AG04449 (cell line): ENCODE measurements at regions of chr6 and their contacts with region 1.

Region 1: DNA sequence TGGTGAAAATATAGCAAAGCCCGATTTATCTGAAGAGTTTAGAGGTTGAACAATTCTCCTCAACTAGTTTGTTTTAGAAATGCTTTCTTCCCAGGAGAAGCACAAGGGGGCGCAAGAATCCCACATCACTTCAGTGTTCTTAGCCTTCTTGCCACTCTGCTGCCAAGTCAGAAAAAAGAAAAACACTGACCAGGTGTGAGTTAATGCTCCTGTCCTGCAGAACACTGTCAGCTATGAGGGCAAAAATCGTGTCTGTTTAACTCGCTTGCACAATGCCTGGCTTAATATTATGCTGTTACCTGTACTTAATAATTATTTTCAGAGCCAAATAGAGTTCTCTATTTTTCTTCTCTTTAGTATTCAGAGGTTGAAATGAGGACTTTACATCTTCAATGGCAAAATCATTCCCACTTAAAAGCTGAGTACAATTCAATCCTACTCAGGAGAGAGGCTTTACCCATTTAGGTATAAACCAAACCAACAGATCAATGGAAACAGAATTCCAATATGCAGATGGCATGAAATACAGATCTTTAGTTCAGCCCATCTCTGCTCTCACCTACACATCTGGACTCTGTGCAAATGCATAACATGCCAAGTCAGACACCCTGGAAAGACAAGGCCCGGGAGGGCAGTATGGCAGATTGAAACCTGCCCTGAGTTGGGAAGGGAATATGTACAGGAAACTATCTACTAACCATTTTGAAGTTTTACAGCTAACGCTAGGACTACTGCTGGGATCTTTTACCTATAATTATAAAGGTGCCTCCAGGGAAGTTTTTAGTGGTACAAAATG is 71.4 kb upstream of the TULP1 start:
- DNase-seq: no peak
- H3K4me3 ChIP-seq: no peak overlapping the region
- CTCF ChIP-seq: peak; percentile 65

Region 2: GRCh38 chr6:35202066-35202546 is 382.0 kb before region 1 on chr6:
- CTCF ChIA-PET with region 1: no interaction called
- POLR2A ChIA-PET with region 1: no interaction called
- DNase-seq: no peak
- H3K4me3 ChIP-seq: no peak overlapping the region
- CTCF ChIP-seq: no peak

Region 3: DNA sequence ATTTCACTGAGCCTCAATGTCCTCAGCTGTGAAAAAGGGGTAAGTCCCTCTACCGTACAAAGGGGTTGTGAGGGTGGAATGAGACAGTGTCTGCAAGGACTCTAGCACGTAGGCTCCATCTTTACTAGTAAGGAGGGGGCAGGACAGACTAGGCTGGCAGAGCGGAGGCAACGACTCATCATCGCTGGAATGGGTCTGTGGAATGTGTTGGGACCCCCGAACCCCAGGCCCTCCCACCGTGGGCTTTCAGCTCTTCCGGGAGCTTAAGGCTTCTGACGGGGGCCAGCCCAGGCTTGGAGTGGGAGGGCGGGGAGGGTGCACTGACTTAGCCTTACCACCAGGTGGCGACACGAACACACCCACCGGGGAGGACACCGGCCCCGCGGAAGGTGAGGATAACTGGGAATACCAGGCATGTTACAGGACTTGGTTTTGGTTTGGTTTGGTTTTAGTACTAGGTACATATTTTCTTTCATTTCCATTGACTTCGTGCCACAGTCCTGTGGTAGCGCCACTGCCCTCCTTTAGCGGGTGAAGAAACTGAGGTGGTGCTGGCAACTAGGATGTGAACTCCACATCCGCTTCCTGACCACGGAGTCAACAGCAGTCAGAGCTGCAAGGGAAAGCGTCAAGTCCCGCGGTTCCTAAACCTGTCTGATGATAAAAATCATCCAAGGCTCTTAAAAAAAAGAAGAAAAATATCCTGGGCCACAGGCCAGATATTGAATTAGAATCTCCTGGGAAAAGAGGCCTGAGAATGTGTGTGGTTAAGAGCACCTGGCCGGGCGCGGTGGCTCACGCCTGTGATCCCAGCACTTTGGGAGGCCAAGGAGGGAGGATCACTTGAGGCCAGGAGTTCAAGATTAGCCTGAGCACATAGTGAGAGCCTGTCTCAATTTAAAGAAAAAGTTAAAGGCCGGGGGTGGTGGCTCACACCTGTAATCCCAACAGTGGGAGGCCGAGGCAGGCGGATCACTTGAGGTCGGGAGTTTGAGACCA is 61.1 kb before region 1 on chr6:
- CTCF ChIA-PET with region 1: interaction called, 22 read pairs
- POLR2A ChIA-PET with region 1: no interaction called
- DNase-seq: no peak
- H3K4me3 ChIP-seq: no peak overlapping the region
- CTCF ChIP-seq: peak; percentile 95

Region 4: DNA sequence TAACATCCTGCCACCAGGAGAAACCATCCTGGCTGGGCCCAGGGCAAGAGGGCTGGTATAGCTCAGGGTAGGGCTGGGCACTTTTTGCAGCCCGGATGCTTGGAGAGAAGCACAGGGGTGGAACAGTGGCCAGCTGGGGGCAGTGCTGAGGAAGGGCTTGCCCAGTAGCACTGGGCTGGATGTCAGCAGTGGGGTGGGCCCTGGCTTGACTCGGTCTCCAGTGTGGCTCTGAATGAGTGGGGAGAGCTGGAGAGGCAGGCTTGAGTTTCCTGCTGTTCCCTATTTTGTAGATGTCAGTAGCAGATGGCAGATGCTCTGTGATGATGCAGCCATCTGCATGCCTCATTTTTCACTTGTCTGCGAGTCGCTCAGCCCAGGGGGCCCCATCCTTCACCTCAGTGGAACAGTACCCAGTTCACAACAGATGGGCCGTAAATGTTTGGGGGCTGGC is 15.1 kb before region 1 on chr6:
- CTCF ChIA-PET with region 1: interaction called, 99 read pairs
- POLR2A ChIA-PET with region 1: no interaction called
- DNase-seq: no peak
- H3K4me3 ChIP-seq: no peak overlapping the region
- CTCF ChIP-seq: peak; percentile 43

Region 5: DNA sequence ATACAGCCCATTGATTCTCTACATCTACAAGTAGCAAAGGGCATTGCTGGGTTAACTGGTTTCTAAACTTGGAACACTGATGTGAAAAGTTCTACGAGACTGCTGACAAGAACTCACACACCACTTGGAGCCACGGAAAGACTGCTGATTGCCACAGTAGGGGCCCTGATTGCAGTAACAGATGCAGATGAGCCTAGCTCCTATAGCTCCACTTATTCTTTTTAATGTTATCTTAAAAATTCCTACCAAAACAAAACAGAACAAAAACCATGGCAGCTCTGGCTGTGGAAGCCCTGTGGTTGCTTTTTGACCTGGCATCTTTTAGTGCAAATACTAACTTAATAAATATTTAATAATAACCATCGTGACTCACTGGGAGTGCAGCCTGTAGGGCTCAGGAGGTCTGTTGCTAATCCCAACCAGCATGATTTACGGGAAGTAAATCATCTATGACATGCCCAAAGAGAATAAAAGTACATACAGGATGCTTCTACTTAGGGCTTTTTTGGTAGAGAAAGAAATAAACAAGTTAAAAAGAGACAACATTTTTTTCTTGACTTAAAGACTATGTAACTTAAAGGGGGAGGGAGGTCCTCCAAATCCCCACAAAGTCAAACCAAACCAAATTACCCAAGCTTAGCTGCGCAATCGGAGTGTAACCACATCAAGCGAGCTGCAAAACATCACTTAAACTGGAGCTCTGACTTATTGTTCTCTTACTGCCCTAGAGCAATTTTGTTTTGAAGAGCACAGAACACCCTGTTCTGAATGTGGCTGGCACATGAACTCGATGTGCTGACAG is 17.4 kb after region 1 on chr6:
- CTCF ChIA-PET with region 1: interaction called, 13 read pairs
- POLR2A ChIA-PET with region 1: no interaction called
- DNase-seq: no peak
- H3K4me3 ChIP-seq: peak overlapping the region; percentile 28
- CTCF ChIP-seq: no peak

Region 6: GRCh38 chr6:35624341-35625070 is 40.4 kb after region 1 on chr6:
- CTCF ChIA-PET with region 1: interaction called, 45 read pairs
- POLR2A ChIA-PET with region 1: no interaction called
- DNase-seq: no peak
- H3K4me3 ChIP-seq: no peak overlapping the region
- CTCF ChIP-seq: peak; percentile 46

Region 7: DNA sequence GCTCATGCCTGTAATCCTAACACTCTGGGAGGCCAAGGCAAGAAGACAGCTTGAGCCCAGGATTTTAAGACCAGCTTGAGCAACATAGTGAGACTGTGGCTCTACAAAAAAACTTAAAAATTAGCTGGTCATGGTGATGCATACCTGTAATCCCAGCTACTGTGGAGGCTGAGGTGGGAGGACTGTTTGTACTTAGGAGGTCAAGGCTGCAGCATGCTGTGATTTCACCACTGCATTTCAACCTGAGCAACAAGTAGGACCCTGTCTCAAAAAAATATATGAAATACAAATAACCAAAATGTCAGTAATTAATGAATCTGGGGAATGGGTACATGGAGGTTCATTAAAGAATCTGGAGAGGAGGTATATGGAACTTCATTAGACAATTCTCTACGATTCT is 94.7 kb after region 1 on chr6:
- CTCF ChIA-PET with region 1: interaction called, 92 read pairs
- POLR2A ChIA-PET with region 1: no interaction called
- DNase-seq: no peak
- H3K4me3 ChIP-seq: no peak overlapping the region
- CTCF ChIP-seq: no peak

Region 8: GRCh38 chr6:35687658-35688580 is 103.8 kb after region 1 on chr6:
- CTCF ChIA-PET with region 1: interaction called, 92 read pairs
- POLR2A ChIA-PET with region 1: interaction called, 4 read pairs
- DNase-seq: no peak
- H3K4me3 ChIP-seq: peak overlapping the region; percentile 70
- CTCF ChIP-seq: no peak